Activated CD4-positive, alpha-beta T cell treated with anti-CD3 and anti-CD28 coated beads for 36 hours (primary cell): ENCODE measurements at regions of chr19 and their contacts with region 1.

Region 1: DNA sequence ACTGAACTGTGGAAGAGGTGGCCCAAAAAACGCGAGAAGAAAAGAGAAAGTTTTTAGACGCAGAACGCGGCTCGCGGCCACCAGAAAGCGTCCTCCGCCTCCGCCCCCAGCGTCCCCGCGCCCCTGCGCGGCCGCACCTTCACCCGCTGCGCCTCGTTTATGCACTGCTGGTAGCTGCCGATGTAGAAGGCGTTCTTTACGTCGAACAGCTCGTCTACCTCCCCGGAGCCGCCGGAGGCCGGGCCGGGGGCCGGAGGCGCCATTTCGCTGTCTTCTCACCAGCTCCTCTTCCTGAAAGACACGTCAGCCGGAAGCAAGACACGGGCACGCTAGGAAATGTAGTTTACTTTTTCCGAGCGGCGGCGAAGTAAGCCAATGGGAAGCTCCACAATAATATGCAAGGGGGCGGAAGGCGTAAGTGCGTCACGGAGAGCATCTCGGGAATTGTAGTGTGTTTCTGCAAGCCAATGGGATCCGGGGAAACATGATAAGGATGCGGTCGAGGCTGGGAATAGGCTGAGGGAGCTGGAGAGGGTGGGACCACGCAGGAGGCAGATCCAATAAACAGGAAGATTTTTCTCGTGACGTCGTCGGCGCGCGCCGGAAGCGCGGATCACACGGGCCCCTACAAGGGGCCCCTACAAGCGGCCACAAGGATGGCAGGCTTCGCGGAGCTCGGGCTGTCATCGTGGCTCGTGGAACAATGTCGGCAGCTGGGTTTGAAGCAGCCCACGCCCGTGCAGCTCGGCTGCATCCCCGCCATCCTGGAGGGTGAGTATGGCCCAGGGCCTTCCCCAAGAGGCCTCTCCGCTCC is at the starts of genes COPE and DDX49:
- DNase-seq: peak; percentile 98
- ATAC-seq: peak; percentile 98
- H3K4me3 Mint-ChIP-seq: peak within 1 kb of the TSS; percentile 99
- H3K27ac Mint-ChIP-seq: peak within 1 kb of the TSS; percentile 96
- H3K4me1 Mint-ChIP-seq: peaks cover 41% of the 10 kb centered on the region
- H3K27me3 Mint-ChIP-seq: no peaks in the 10 kb centered on the region
- total RNA-seq, gene COPE: 158 to 182 TPM
- total RNA-seq, gene DDX49: 51.4 to 53.4 TPM

Region 2: GRCh38 chr19:18192673-18193387 is 726.5 kb before region 1 on chr19 and contains the start of gene MPV17L2:
- CTCF ChIA-PET with region 1: no interaction called
- POLR2A ChIA-PET with region 1: no interaction called
- intact Hi-C with region 1: loop called in 1 of 2 experiments (anchors 2 kb)
- DNase-seq: peak; percentile 99
- ATAC-seq: peak; percentile 95
- H3K4me3 Mint-ChIP-seq: peak within 1 kb of the TSS; percentile 79
- H3K27ac Mint-ChIP-seq: peak within 1 kb of the TSS; percentile 91
- H3K4me1 Mint-ChIP-seq: peaks cover 22% of the 10 kb centered on the region
- H3K27me3 Mint-ChIP-seq: no peaks in the 10 kb centered on the region
- total RNA-seq, gene MPV17L2: 5.7 to 6.2 TPM

Region 3: DNA sequence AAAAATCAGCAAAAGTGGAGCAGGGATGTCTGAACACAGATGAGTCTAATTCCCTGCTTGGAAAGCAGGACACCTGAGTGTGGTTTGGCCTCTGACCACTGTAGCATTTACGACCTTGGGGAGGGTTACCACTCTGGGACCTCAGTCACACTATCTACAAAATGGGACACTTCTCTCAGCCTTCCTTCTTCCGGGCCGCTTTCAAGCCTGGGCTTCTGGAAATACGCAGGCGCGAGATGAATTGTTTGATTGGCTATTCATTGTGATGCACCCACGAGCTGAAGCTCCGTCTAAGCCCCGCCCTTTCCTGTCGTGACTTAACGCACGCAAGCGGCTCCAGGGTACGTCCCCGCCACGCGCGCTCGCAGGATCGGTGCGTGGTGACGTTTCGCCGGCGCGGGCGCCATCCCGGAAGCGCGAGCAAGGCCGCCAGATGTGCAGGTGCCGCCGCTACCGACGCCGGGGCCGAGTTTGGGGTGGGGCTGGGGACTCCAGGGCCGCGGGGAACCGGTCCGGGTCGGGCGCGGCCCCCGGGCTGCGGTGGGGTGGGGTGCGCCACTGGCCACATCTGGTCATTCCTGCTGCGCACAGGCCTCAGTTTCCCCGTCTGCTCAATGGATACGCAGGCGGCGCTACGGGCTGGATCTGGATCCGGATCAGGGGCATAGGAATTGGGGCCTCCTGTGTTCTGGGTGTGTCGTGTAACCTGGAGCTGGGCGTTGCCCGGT is 361.7 kb before region 1 on chr19 and contains the start of gene KXD1:
- CTCF ChIA-PET with region 1: interaction called, 3 read pairs
- POLR2A ChIA-PET with region 1: interaction called, 3 read pairs
- intact Hi-C with region 1: loop called in 1 of 2 experiments (anchors 1 kb)
- DNase-seq: peak; percentile 99
- ATAC-seq: peak; percentile 99
- H3K4me3 Mint-ChIP-seq: peak within 1 kb of the TSS; percentile 91
- H3K27ac Mint-ChIP-seq: peak within 1 kb of the TSS; percentile 95
- H3K4me1 Mint-ChIP-seq: peaks cover 20% of the 10 kb centered on the region
- H3K27me3 Mint-ChIP-seq: no peaks in the 10 kb centered on the region
- total RNA-seq, gene KXD1: 121 to 170 TPM

Region 4: DNA sequence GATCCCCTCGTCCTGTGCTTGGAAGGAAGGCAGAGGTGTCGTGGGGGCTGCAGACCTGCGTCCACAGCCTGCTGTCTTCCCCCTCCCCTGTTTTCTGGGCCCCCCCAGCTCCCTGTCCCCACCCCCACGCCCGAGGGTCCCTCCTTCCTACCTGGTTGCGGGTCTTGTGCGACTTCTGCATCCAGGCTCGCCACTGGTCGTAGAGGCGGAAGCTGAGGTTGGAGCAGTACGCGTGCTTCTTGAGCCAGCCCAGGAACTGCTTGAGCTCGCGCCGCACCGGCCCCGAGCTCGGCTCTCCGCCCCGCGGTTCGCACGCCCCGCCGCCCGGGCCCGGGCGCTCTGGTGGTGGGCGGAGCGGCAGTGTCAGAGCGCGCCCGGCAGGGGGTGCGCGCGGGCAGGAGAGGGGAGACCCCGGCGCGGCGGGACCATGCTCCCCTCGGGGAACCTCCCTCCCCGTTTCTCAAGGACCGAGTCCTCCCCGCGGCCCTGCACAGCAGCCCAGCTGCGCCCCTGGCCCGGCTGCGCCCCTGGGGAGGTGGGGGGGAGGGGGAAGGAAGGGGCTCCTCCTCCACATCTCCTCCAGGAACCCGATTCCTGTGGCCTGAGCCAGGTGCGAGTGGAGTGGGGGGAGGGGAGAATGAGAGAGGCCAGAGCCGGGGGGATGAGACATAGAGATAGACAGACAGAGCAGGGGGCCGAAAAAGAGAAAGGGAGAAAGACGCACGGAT is 325.0 kb before region 1 on chr19:
- CTCF ChIA-PET with region 1: interaction called, 11 read pairs
- POLR2A ChIA-PET with region 1: interaction called, 3 read pairs
- intact Hi-C with region 1: loop called (anchors 1 to 2 kb)
- DNase-seq: peak; percentile 87
- ATAC-seq: peak; percentile 72
- H3K4me3 Mint-ChIP-seq: peak overlapping the region; percentile 72
- H3K27ac Mint-ChIP-seq: peak overlapping the region; percentile 56
- H3K4me1 Mint-ChIP-seq: peaks cover 23% of the 10 kb centered on the region
- H3K27me3 Mint-ChIP-seq: peaks cover 3% of the 10 kb centered on the region

Region 5: DNA sequence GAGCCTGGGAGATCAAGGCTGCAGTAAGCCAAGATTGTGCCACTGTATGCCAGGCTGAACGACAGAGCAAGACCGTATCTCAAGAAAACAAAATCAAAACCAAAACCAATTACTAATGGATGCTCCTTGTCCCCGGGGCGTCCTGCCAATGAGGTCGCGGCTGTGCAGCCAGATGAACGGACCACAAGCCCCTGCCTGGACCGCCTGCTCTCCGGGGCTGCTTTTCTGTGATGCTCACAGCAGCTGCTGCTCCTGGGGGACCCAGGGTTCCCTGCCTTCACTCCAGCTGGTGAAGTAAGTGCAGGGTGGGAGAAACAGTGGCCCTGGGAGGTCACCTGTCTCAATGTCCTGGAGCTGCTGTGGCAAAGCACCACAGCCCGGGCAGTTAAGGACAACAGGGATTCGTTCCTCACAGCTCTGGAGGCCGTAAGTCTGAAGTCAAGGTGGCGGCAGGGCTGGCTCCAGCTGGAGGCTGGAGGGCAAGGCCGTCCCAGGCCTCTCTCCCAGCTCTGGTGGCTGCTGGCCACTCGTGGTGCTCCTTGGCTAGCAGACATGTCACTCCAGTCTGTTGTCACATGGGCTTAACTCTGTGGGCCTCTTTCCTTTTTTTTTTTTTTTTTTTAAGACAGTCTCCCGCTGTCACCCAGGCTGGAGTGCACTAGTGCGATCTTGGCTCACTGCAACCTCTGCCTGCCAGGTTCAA is 10.2 kb before region 1 on chr19:
- CTCF ChIA-PET with region 1: interaction called, 10 read pairs
- POLR2A ChIA-PET with region 1: no interaction called
- intact Hi-C with region 1: no loop called
- DNase-seq: no peak
- ATAC-seq: no peak
- H3K4me3 Mint-ChIP-seq: no peak overlapping the region
- H3K27ac Mint-ChIP-seq: no peak overlapping the region
- H3K4me1 Mint-ChIP-seq: no peaks in the 10 kb centered on the region
- H3K27me3 Mint-ChIP-seq: no peaks in the 10 kb centered on the region

Region 6: GRCh38 chr19:19033426-19034203 is 114.3 kb after region 1 on chr19 and contains the starts of genes ARMC6 and SUGP2:
- CTCF ChIA-PET with region 1: no interaction called
- POLR2A ChIA-PET with region 1: no interaction called
- intact Hi-C with region 1: loop called (anchors 1 kb)
- DNase-seq: peak; percentile 92
- ATAC-seq: peak; percentile 78
- H3K4me3 Mint-ChIP-seq: peak within 1 kb of the TSS; percentile 98
- H3K27ac Mint-ChIP-seq: peak within 1 kb of the TSS; percentile 96
- H3K4me1 Mint-ChIP-seq: peaks cover 31% of the 10 kb centered on the region
- H3K27me3 Mint-ChIP-seq: no peaks in the 10 kb centered on the region
- total RNA-seq, gene ARMC6: 33.0 to 40.8 TPM
- total RNA-seq, gene SUGP2: 89.8 to 104 TPM

Region 7: DNA sequence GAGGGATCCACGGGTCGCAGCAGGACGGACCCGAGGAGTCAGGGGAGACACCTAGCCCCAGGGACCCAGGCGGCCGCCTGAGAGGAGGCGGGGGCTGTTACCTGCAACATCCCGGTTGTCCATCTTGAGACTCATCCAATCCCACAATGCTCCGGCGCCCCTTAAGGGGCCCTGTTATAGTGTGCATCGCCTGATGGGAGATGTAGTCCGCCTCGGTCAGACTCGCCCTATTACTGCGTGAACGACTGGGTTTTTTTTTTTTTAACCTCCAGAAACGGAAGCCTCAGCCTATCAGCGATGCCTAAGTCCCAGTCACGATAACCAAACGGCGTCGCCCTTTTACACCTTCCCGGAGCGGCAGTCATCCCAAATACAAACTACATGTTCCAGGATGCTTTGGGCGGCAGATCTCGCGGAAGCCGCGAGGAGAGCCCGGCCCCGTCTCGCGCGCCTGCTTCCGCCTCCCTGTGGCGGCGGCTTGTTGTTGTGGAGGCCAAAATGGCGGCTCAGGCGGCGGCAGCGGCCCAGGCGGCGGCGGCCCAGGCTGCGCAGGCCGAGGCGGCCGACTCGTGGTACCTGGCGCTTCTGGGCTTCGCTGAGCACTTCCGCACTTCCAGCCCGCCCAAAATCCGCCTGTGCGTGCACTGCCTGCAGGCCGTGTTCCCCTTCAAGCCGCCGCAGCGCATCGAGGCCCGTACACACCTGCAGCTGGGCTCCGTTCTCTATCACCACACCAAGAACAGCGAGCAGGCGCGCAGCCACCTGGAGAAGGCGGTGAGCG is 401.3 kb after region 1 on chr19 and contains the starts of genes MAU2 and SUGP1:
- CTCF ChIA-PET with region 1: no interaction called
- POLR2A ChIA-PET with region 1: no interaction called
- intact Hi-C with region 1: loop called in 1 of 2 experiments (anchors 1 kb)
- DNase-seq: peak; percentile 96
- ATAC-seq: peak; percentile 93
- H3K4me3 Mint-ChIP-seq: peak within 1 kb of the TSS; percentile 93
- H3K27ac Mint-ChIP-seq: peak within 1 kb of the TSS; percentile 100
- H3K4me1 Mint-ChIP-seq: peaks cover 39% of the 10 kb centered on the region
- H3K27me3 Mint-ChIP-seq: no peaks in the 10 kb centered on the region
- total RNA-seq, gene MAU2: 33.3 to 45.7 TPM
- total RNA-seq, gene SUGP1: 49.4 to 62.0 TPM